Activated naive CD4-positive, alpha-beta T cell treated with anti-CD3 and anti-CD28 coated beads, Interleukin-2, amount 10 ng/mL, durations not matched to agents 7 days and 5 days (primary cell): ENCODE measurements at regions of chr15 and their contacts with region 1.

Region 1: GRCh38 chr15:60444289-60444912 is 34.5 kb downstream of the ICE2 start:
- DNase-seq: no peak
- H3K4me3 Mint-ChIP-seq: no peak overlapping the region
- H3K27ac Mint-ChIP-seq: no peak overlapping the region
- H3K4me1 Mint-ChIP-seq: peaks cover 4% of the 10 kb centered on the region
- H3K27me3 Mint-ChIP-seq: no peaks in the 10 kb centered on the region

Region 2: DNA sequence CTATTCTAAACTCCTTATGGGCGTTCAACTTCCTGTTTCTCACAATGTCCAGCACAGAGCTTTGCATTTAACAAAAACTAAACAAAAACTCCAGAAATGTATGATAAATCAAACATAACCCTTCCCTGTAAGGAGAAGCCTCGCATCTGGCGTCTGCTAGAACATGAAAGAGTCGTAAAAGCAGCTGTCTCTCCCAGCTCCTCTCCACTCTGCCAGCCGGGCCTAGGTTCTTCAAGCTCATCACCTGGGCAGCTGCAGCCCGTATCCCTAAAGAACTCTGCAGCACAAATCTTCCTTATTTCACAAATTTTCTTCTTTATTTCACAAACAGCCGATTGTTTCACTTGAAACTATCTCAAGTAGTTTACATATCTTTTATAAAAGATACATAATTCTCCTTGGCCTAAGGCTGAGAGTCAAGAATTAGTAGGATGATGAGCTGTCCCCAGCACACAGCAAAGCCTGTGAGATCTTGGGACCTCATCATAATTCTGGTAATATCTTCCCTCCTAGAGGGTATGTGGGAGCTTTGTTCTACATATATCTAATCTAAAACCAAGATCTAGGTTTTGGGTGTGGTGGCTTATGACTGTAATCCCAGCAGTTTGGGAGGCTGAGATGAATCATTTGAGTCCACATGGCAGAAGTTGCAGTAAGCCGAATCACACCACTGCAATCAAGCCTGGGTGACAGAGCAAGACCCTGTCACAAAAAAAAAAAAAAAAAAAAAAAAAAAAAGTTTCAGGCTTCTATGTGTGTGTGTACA is 81.9 kb before region 1 on chr15:
- CTCF ChIA-PET with region 1: interaction called, 30 read pairs
- DNase-seq: peak; percentile 48
- H3K4me3 Mint-ChIP-seq: no peak overlapping the region
- H3K27ac Mint-ChIP-seq: peak overlapping the region; percentile 80
- H3K4me1 Mint-ChIP-seq: peaks cover 33% of the 10 kb centered on the region
- H3K27me3 Mint-ChIP-seq: no peaks in the 10 kb centered on the region

Region 3: GRCh38 chr15:60423537-60423936 is 20.9 kb before region 1 on chr15:
- CTCF ChIA-PET with region 1: no interaction called
- DNase-seq: peak; percentile 25
- H3K4me3 Mint-ChIP-seq: no peak overlapping the region
- H3K27ac Mint-ChIP-seq: no peak overlapping the region
- H3K4me1 Mint-ChIP-seq: peaks cover 12% of the 10 kb centered on the region
- H3K27me3 Mint-ChIP-seq: no peaks in the 10 kb centered on the region

Region 4: DNA sequence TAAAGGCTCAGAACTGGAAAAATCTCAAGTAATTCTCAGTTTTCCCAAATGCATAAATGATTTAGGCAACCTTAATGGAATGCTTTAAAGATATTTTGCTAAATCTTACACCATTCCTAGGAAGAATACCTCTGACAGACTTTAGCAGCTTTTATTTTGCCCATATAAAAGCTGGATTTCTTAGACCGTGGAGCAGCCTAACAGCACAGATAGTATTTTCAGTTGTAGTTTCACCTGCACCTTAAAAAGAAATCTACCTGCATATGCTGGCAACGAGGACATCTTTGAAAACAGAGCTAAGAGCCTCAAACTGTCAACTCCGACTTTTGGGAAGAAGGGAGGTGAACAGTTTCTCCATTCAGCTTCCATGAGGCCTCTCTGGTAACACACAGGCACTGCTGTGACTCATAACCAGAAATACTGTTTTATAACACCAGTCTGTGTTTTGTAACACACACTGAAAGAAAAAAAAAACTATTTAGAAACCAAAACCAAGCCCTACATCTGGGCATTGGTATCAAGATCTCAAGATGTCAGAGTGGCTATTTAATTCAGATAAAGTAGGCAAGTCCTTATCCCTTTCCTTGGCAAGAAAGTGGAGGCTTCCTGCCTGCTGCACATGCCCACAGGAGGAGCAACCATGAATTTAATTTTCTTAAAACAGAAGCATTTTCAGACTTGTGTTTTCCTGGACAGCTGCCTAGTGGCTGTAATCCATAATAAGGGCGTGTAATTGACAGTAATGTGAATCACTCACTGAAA is 216.1 kb after region 1 on chr15:
- CTCF ChIA-PET with region 1: no interaction called
- DNase-seq: no peak
- H3K4me3 Mint-ChIP-seq: no peak overlapping the region
- H3K27ac Mint-ChIP-seq: no peak overlapping the region
- H3K4me1 Mint-ChIP-seq: peaks cover 16% of the 10 kb centered on the region
- H3K27me3 Mint-ChIP-seq: no peaks in the 10 kb centered on the region

Region 5: GRCh38 chr15:60737217-60737616 is 292.8 kb after region 1 on chr15:
- CTCF ChIA-PET with region 1: no interaction called
- DNase-seq: no peak
- H3K4me3 Mint-ChIP-seq: no peak overlapping the region
- H3K27ac Mint-ChIP-seq: no peak overlapping the region
- H3K4me1 Mint-ChIP-seq: no peaks in the 10 kb centered on the region
- H3K27me3 Mint-ChIP-seq: peaks cover 3% of the 10 kb centered on the region